K562 (cell line): ENCODE measurements at regions of chr3 and their contacts with region 1.

Region 1: GRCh38 chr3:181700168-181701087 is 11.3 kb upstream of the SOX2 start:
- DNase-seq: peak; percentile 72 to 75 (median 73)
- ATAC-seq: peak; percentile 88
- H3K4me3 ChIP-seq: no peak overlapping the region
- H3K27ac ChIP-seq: no peak overlapping the region
- H3K4me1 ChIP-seq: peaks cover 0 to 13% of the 10 kb centered on the region in 2 experiments; a peak in 2 of 5 replicates
- H3K27me3 ChIP-seq: peaks cover 11 to 27% of the 10 kb centered on the region in 2 experiments; a peak in 4 of 5 replicates
- CTCF ChIP-seq: peak; percentile 74 to 80 (median 77)
- EP300 ChIP-seq: no peak
- POLR2A ChIP-seq: no peak
- RAD21 ChIP-seq: peak; percentile 32 to 54; a peak in 3 of 4 replicates

Region 2: GRCh38 chr3:180912304-180913296 is 787.8 kb before region 1 on chr3 and contains the start of gene FXR1:
- CTCF ChIA-PET with region 1: no interaction called
- POLR2A ChIA-PET with region 1: no interaction called
- in situ Hi-C with region 1: no loop called
- intact Hi-C with region 1: loop called (anchors 10 kb)
- DNase-seq: peak; percentile 87 to 91 (median 90)
- ATAC-seq: peak; percentile 96
- H3K4me3 ChIP-seq: peak within 1 kb of the TSS; percentile 99
- H3K27ac ChIP-seq: peak within 1 kb of the TSS; percentile 100
- H3K4me1 ChIP-seq: peaks cover 3 to 12% of the 10 kb centered on the region in 2 experiments; a peak in 3 of 5 replicates
- H3K27me3 ChIP-seq: no peaks in the 10 kb centered on the region
- CTCF ChIP-seq: peak; percentile 49 to 70 (median 50); a peak in 5 of 6 replicates
- EP300 ChIP-seq: no peak
- POLR2A ChIP-seq: peak; percentile 95
- RAD21 ChIP-seq: peak in 1 of 2 experiments; percentile 20; a peak in 1 of 4 replicates
- polyA plus RNA-seq, gene FXR1: 59.4 to 81.1 TPM

Region 3: DNA sequence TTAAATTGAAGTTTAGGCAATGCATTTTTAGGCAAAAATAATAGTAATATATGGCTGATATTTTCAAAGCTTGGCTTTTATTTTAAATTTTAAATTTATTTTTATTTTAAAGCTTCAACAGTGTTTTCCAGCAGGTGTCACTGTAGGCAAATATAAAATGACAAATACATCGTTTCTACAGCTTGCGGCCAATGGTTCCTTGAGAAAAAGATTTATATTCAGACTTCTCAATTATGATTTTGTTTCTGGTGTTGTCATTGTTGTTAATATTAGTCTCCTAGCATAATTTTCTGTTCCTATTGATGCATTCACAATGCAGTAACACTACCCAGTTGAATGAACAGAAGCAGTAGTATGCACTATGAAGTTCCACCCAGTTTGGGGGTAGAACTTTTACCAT is 490.2 kb before region 1 on chr3:
- CTCF ChIA-PET with region 1: interaction called, 3 read pairs
- POLR2A ChIA-PET with region 1: no interaction called
- in situ Hi-C with region 1: no loop called
- intact Hi-C with region 1: loop called (anchors 2 kb)
- DNase-seq: peak in 1 of 4 experiments; percentile 3
- ATAC-seq: no peak
- H3K4me3 ChIP-seq: no peak overlapping the region
- H3K27ac ChIP-seq: no peak overlapping the region
- H3K4me1 ChIP-seq: no peaks in the 10 kb centered on the region
- H3K27me3 ChIP-seq: no peaks in the 10 kb centered on the region
- CTCF ChIP-seq: peak in 1 of 3 experiments; percentile 28; a peak in 2 of 6 replicates
- EP300 ChIP-seq: no peak
- POLR2A ChIP-seq: no peak
- RAD21 ChIP-seq: no peak

Region 4: DNA sequence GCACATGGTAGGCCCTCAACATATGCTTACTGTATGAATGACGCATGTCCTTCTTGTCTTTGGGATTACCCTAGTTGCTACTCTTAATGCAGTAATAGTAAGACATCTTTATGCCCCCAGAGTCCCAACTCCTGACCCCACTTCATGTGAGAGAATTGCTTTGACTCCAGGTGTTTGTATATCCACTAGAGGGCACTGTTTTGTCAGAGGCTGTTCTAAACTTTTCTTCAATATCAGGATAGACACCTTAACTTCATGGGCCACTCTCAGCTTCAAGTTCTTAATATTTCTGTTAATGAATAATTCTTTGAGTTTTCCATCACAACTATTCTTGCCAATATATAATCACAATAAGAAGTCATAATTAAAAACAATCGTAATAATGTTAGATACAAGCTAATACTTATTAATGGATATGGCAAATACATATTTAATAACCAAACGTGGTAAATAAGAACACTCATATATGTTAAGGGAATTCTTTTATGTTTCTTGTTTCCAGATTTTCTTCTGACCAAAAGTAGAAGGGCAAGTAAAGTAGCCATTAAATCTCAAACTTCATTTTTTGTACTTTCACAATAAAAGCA is 373.7 kb before region 1 on chr3:
- CTCF ChIA-PET with region 1: no interaction called
- POLR2A ChIA-PET with region 1: no interaction called
- in situ Hi-C with region 1: no loop called
- intact Hi-C with region 1: loop called (anchors 5 kb)
- DNase-seq: peak; percentile 16 to 25 (median 20)
- ATAC-seq: no peak
- H3K4me3 ChIP-seq: no peak overlapping the region
- H3K27ac ChIP-seq: no peak overlapping the region
- H3K4me1 ChIP-seq: no peaks in the 10 kb centered on the region
- H3K27me3 ChIP-seq: no peaks in the 10 kb centered on the region
- CTCF ChIP-seq: peak in 2 of 3 experiments; percentile 37 to 51; a peak in 4 of 6 replicates
- EP300 ChIP-seq: no peak
- POLR2A ChIP-seq: no peak
- RAD21 ChIP-seq: peak; percentile 37 to 41; a peak in 3 of 4 replicates